ENCODE measurements at regions of chr3 and their contacts with region 1.

Region 1: GRCh38 chr3:11523572-11524101 is 120.1 kb downstream of the VGLL4 start:
- DNase-seq: no peak
- ATAC-seq: no peak
- H3K4me3 ChIP-seq: no peak overlapping the region
- H3K27ac ChIP-seq: peak overlapping the region; percentile 91
- H3K4me1 ChIP-seq: peaks cover 34% of the 10 kb centered on the region
- H3K27me3 ChIP-seq: no peaks in the 10 kb centered on the region
- CTCF ChIP-seq: no peak

Region 2: GRCh38 chr3:11140054-11140712 is 383.5 kb before region 1 on chr3:
- CTCF ChIA-PET with region 1: no interaction called
- POLR2A ChIA-PET with region 1: no interaction called
- intact Hi-C with region 1: no loop called
- DNase-seq: peak; percentile 85
- ATAC-seq: peak; percentile 42
- H3K4me3 ChIP-seq: peak overlapping the region; percentile 52
- H3K27ac ChIP-seq: peak overlapping the region; percentile 93
- H3K4me1 ChIP-seq: peaks cover 41% of the 10 kb centered on the region
- H3K27me3 ChIP-seq: no peaks in the 10 kb centered on the region
- CTCF ChIP-seq: 0 out of 2 replicates have a peak, but pooled peaks have one; percentile 8

Region 3: DNA sequence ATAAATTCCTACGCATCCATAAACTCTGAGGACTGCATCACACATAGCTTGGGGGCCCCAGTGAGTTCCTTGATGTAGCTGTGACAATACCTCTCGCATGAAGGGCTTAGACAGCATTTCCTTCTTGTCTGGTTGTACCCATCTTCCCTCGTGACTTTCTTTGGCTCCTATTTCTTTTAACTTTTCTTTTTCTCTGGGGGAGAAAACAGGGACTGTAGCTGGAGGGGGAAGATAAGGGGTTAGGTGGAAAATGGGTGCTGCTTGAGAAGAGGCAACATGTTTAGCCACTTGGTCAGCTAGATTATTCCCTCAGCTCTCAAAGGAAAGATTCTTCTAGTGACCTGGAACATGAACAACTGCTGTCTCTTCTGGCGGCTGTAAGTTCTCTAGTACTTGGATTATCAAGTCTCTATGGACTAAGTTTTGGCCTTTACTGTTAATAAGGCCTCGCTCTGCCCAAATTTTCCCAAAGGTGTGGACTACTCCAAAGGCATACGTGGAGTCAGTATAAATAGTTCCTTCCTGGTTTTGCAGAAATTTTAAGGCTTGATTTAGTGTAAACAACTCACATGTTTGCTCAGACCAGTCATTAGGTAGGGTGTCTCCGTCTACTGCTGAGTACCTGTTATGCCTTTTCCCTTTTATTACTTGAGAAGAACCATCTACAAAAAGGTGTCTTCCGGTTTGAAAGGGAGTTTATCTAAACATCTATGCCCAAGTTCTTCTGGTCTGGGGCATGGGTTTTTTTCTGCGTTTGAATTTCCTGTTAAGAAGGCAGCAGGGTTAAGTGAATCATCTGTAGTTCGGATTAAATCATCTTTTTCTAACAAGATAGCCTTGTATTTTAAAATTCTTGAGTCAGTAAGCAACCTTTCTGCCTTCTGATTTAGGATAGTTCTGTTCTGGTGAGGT is 272.5 kb before region 1 on chr3:
- CTCF ChIA-PET with region 1: no interaction called
- POLR2A ChIA-PET with region 1: no interaction called
- intact Hi-C with region 1: no loop called
- DNase-seq: peak; percentile 74
- ATAC-seq: peak; percentile 89
- H3K4me3 ChIP-seq: peak overlapping the region; percentile 24; the same call in 1 of the 2 replicates
- H3K27ac ChIP-seq: peak overlapping the region; percentile 90
- H3K4me1 ChIP-seq: peaks cover 33% of the 10 kb centered on the region
- H3K27me3 ChIP-seq: no peaks in the 10 kb centered on the region
- CTCF ChIP-seq: no peak

Region 4: GRCh38 chr3:11479221-11479620 is 44.4 kb before region 1 on chr3:
- CTCF ChIA-PET with region 1: no interaction called
- POLR2A ChIA-PET with region 1: no interaction called
- intact Hi-C with region 1: loop called (anchors 2 kb)
- DNase-seq: no peak
- ATAC-seq: peak; percentile 57
- H3K4me3 ChIP-seq: no peak overlapping the region
- H3K27ac ChIP-seq: peak overlapping the region; percentile 54
- H3K4me1 ChIP-seq: peaks cover 24% of the 10 kb centered on the region
- H3K27me3 ChIP-seq: no peaks in the 10 kb centered on the region
- CTCF ChIP-seq: no peak

Region 5: GRCh38 chr3:11498646-11499045 is 25.0 kb before region 1 on chr3:
- CTCF ChIA-PET with region 1: no interaction called
- POLR2A ChIA-PET with region 1: no interaction called
- intact Hi-C with region 1: loop called (anchors 1 kb)
- DNase-seq: peak; percentile 82
- ATAC-seq: peak; percentile 83
- H3K4me3 ChIP-seq: peak overlapping the region; percentile 30
- H3K27ac ChIP-seq: peak overlapping the region; percentile 84
- H3K4me1 ChIP-seq: peaks cover 21% of the 10 kb centered on the region
- H3K27me3 ChIP-seq: no peaks in the 10 kb centered on the region
- CTCF ChIP-seq: no peak

Measured in PC-3 (cell line).